Ascending aorta (tissue), 2 donors: ENCODE measurements at regions of chr19 and their contacts with region 1.

Region 1: DNA sequence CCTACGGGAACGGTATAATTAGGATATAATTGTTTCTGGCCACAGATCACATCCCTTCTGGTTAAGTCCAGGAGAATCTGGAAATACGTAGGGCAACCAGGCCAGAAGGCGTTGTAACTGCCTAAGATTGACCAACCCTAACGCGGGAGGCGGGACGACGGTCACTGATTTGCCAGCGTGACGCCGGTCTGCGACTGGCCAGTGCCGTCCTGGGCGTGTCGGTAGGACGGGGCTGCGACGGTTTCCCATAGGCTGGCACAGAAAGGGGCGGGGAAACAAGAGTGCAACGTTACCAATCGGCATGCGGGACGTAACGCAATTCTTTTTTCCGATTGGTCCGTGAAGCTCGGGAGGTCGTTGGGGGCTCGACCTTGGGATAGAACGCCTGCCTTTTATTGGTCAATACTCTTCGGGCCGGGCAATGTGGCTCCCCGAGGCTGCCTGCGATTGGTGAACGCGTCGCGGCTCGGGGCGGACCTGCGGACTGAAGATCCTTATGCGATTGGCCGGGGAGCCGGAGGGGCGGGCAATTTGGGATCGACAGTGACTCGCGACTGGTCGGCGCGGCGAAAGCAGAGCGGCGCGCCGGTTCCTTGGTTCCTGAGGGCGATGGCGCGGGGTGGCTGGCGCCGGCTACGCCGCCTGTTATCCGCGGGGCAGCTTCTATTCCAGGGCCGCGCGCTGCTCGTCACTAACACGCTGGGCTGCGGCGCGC is at the start of gene MPV17L2:
- DNase-seq: peak; percentile 98 to 100
- H3K4me3 ChIP-seq: peak within 1 kb of the TSS; percentile 84 to 96
- H3K27ac ChIP-seq: peak within 1 kb of the TSS; percentile 87 to 92
- H3K4me1 ChIP-seq: peaks cover 10 to 11% of the 10 kb centered on the region in 2 donors
- H3K27me3 ChIP-seq: no peaks in the 10 kb centered on the region
- CTCF ChIP-seq: no peak
- total RNA-seq, gene MPV17L2: 9.5 TPM

Region 2: GRCh38 chr19:18224525-18225354 is 31.9 kb after region 1 on chr19:
- intact Hi-C with region 1: loop called (anchors 1 kb)
- DNase-seq: peak; percentile 87 to 99
- H3K4me3 ChIP-seq: peak overlapping the region; percentile 44 to 54
- H3K27ac ChIP-seq: no peak overlapping the region
- H3K4me1 ChIP-seq: peaks cover 7 to 15% of the 10 kb centered on the region in 2 donors
- H3K27me3 ChIP-seq: peaks cover 16% of the 10 kb centered on the region
- CTCF ChIP-seq: no peak

Region 3: GRCh38 chr19:18251587-18252369 is 58.9 kb after region 1 on chr19:
- intact Hi-C with region 1: loop called (anchors 1 kb)
- DNase-seq: peak in 1 of 2 donors; percentile 82
- H3K4me3 ChIP-seq: no peak overlapping the region
- H3K27ac ChIP-seq: no peak overlapping the region
- H3K4me1 ChIP-seq: no peaks in the 10 kb centered on the region
- H3K27me3 ChIP-seq: no peaks in the 10 kb centered on the region
- CTCF ChIP-seq: peak; percentile 96 to 98 (median 96)

Region 4: DNA sequence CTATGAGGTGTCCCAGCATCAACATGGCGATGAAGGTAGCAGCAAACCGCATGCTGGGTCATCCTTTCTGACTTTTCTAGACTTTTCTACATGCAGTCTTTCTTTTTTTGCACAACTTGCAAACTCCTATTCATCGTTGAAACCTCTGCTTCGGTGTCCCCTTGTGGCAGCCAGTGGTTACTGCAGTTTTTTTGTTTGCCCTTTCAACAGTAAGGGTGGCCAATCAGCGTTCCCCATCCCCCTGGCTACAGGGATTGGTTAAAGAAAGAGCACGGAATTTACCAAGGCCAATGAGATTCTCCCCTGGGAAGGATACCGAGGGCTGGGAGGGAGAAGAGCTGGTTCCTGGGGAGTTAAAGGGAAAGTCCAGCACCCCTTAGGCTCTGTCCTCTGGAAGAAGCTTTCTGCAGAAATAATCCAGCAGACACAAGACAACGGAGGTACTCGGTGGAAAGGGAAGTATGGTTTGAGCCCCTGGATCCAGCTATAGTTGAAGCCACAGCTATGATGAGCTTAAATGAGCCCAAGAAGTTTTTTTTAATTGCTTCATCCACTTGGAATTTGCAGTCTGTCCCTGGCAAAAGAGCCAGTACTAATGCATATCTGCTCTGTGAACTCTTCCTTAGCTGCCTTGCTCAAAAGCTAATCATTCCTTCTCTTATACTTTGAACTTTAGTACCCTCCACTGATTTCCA is 135.7 kb after region 1 on chr19:
- intact Hi-C with region 1: loop called (anchors 5 kb)
- DNase-seq: peak; percentile 79 to 97
- H3K4me3 ChIP-seq: peak overlapping the region; percentile 18 to 41
- H3K27ac ChIP-seq: peak overlapping the region; percentile 28 to 50
- H3K4me1 ChIP-seq: peaks cover 0 to 19% of the 10 kb centered on the region in 2 donors
- H3K27me3 ChIP-seq: no peaks in the 10 kb centered on the region
- CTCF ChIP-seq: peak; percentile 88 to 96 (median 92)